T-cell (primary cell): ENCODE measurements at regions of chr19 and their contacts with region 1.

Region 1: GRCh38 chr19:38247734-38248268 is 8.4 kb downstream of the PPP1R14A start:
- DNase-seq: no peak
- ATAC-seq: no peak
- H3K4me3 ChIP-seq: no peak overlapping the region
- H3K4me3 Mint-ChIP-seq: no peak overlapping the region
- H3K27ac ChIP-seq: no peak overlapping the region
- H3K27ac Mint-ChIP-seq: no peak overlapping the region
- H3K4me1 ChIP-seq: peaks cover 0 to 7% of the 10 kb centered on the region in 2 experiments
- H3K4me1 Mint-ChIP-seq: peaks cover 4 to 8% (median 6%) of the 10 kb centered on the region in 3 donors
- H3K27me3 ChIP-seq: peaks cover 0 to 23% of the 10 kb centered on the region in 2 experiments
- H3K27me3 Mint-ChIP-seq: peaks cover 4 to 6% of the 10 kb centered on the region in 2 donors

Region 2: GRCh38 chr19:38009650-38010242 is 238.1 kb before region 1 on chr19:
- CTCF ChIA-PET with region 1: no interaction called
- POLR2A ChIA-PET with region 1: no interaction called
- DNase-seq: no peak
- ATAC-seq: no peak
- H3K4me3 ChIP-seq: no peak overlapping the region
- H3K4me3 Mint-ChIP-seq: no peak overlapping the region
- H3K27ac ChIP-seq: no peak overlapping the region
- H3K27ac Mint-ChIP-seq: peak overlapping the region in 1 of 2 donors; percentile 77
- H3K4me1 ChIP-seq: peaks cover 0 to 4% of the 10 kb centered on the region in 2 experiments
- H3K4me1 Mint-ChIP-seq: peaks cover 0 to 20% (median 7%) of the 10 kb centered on the region in 3 donors
- H3K27me3 ChIP-seq: no peaks in the 10 kb centered on the region
- H3K27me3 Mint-ChIP-seq: no peaks in the 10 kb centered on the region

Region 3: DNA sequence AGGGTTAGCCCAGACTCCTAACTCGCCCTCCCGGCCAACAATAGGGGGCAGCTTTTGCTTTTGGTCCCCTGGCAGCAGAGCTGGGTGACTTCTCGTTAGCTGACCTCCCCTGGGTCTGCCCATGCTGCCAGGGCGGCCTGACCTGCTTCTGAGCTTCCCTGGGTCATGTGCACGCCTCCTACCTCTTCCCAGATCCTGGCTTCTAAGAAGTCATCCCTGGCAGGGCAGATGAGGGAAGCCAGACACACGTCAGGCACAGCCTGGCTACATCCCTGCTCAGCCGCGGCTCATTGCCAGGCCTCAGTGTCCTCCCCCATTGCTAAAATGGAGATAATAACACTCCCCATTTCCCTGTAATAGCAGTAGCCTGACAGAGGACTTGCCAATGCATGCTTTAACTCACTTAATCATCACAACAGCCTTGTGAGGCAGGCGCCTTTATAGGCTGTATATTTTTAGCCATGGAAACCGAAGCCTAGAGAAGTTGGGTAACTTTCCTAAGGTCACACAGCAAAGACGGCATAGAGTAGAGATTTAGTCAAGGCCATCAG is 73.9 kb after region 1 on chr19:
- CTCF ChIA-PET with region 1: no interaction called
- POLR2A ChIA-PET with region 1: interaction called in 1 of 2 experiments, 11 read pairs
- DNase-seq: no peak
- ATAC-seq: no peak
- H3K4me3 ChIP-seq: no peak overlapping the region
- H3K4me3 Mint-ChIP-seq: peak overlapping the region; percentile 29 to 85 (median 66)
- H3K27ac ChIP-seq: no peak overlapping the region
- H3K27ac Mint-ChIP-seq: peak overlapping the region; percentile 58 to 70
- H3K4me1 ChIP-seq: peaks cover 3 to 42% of the 10 kb centered on the region in 2 experiments
- H3K4me1 Mint-ChIP-seq: peaks cover 43 to 51% (median 48%) of the 10 kb centered on the region in 3 donors
- H3K27me3 ChIP-seq: no peaks in the 10 kb centered on the region
- H3K27me3 Mint-ChIP-seq: no peaks in the 10 kb centered on the region

Region 4: GRCh38 chr19:38335949-38336637 is 88.3 kb after region 1 on chr19:
- CTCF ChIA-PET with region 1: interaction called, 4 to 13 read pairs
- POLR2A ChIA-PET with region 1: interaction called in 1 of 2 experiments, 3 read pairs
- DNase-seq: peak; percentile 87 to 96 (median 93)
- ATAC-seq: peak; percentile 74 to 77 (median 76)
- H3K4me3 ChIP-seq: peak overlapping the region; percentile 77 to 80
- H3K4me3 Mint-ChIP-seq: peak overlapping the region; percentile 88 to 93 (median 90)
- H3K27ac ChIP-seq: peak overlapping the region; percentile 96
- H3K27ac Mint-ChIP-seq: peak overlapping the region; percentile 93 to 98
- H3K4me1 ChIP-seq: peaks cover 4 to 19% of the 10 kb centered on the region in 2 experiments
- H3K4me1 Mint-ChIP-seq: peaks cover 13 to 17% (median 14%) of the 10 kb centered on the region in 3 donors
- H3K27me3 ChIP-seq: no peaks in the 10 kb centered on the region
- H3K27me3 Mint-ChIP-seq: no peaks in the 10 kb centered on the region

Region 5: DNA sequence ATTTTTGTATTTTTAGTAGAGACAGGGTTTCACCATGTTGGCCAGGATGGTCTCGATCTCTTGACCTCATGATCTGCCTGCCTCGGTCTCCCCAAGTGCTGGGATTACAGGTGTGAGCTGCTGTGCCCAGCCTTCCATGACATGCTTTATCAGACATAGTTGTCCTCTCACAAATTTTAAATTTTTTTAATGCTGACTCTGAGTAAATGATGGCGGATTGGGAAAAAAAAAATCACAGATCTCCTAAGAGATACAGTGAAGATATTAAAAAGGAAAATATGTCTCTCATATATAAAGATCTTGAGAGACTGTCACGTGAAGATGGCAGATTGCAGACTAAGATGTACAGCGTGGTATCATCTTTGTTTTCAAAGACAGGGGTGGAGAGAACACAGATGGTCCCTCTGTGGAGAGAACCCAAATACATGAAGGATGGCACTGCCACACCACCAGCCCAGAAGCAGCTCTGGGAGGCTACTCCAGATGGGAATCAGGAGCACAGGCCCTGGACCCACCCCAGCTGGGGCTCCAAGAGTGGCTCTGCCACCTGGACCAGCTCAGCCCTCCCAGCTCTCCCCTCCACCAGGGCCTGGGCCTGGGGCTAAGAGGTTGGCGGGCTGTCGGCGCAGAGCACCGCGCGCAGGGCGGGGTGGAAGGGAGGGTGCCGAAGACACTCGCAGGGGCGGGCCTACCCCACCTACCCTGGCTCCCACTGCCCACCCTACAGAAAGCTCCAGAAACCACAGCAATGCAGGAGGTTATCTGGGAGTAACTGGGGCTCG is 1998.7 kb after region 1 on chr19:
- CTCF ChIA-PET with region 1: interaction called in 1 of 2 experiments, 16 read pairs
- POLR2A ChIA-PET with region 1: no interaction called
- DNase-seq: no peak
- ATAC-seq: peak in 1 of 4 experiments; percentile 28
- H3K4me3 ChIP-seq: no peak overlapping the region
- H3K4me3 Mint-ChIP-seq: no peak overlapping the region
- H3K27ac ChIP-seq: no peak overlapping the region
- H3K27ac Mint-ChIP-seq: no peak overlapping the region
- H3K4me1 ChIP-seq: peaks cover 0 to 10% of the 10 kb centered on the region in 2 experiments
- H3K4me1 Mint-ChIP-seq: peaks cover 12 to 24% (median 13%) of the 10 kb centered on the region in 3 donors
- H3K27me3 ChIP-seq: no peaks in the 10 kb centered on the region
- H3K27me3 Mint-ChIP-seq: no peaks in the 10 kb centered on the region